Sigmoid colon (tissue), 7 donors: ENCODE measurements at regions of chr15 and their contacts with region 1.

Region 1: DNA sequence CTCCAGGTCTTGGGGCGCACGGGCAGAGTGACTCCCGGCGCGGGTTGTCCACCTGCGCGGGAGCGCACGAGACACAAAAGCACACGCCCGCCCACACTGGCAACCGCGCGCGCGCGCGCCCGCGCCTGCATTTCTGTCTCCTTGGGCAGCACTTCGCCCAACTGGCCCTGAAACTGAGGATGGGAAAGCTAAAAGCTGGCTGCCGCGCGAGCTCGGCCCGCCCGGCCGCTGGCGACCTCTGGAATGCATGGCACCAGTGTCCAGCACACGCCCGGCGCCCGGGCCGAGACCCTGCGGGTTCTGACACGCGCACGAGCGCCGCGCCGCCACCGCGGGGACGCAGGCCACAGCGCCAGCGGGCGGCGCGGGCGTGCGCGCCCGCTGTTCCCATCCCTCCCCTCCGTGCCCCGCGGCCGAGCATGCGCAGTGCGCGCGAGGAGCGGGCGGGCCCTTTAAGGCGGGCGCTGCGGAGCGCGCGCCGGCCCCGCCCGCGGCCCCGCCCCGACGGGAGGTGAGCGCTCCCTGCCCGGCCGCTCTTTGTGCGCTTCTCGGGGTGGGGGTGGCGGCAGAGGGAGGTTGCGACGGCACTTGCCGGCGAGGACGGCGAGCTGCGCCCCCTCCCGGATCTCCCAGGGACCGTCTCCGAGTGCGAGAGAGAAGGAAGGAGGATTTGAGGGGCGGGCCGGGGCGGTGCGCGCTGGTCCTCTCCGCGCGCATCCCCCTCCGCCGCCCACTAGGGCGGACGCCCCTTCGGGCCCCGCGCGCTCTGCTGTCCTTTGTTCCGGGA is 1.0 kb upstream of the MEX3B start:
- DNase-seq: peak; percentile 96
- H3K4me3 ChIP-seq: peak overlapping the region; percentile 73 to 96 (median 87)
- H3K27ac ChIP-seq: peak overlapping the region; percentile 98
- H3K4me1 ChIP-seq: peaks cover 0 to 32% (median 24%) of the 10 kb centered on the region in 4 donors
- H3K27me3 ChIP-seq: no peaks in the 10 kb centered on the region
- CTCF ChIP-seq: peak; percentile 26 to 72 (median 58)
- EP300 ChIP-seq: no peak
- POLR2A ChIP-seq: peak in 1 of 2 donors; percentile 15

Region 2: DNA sequence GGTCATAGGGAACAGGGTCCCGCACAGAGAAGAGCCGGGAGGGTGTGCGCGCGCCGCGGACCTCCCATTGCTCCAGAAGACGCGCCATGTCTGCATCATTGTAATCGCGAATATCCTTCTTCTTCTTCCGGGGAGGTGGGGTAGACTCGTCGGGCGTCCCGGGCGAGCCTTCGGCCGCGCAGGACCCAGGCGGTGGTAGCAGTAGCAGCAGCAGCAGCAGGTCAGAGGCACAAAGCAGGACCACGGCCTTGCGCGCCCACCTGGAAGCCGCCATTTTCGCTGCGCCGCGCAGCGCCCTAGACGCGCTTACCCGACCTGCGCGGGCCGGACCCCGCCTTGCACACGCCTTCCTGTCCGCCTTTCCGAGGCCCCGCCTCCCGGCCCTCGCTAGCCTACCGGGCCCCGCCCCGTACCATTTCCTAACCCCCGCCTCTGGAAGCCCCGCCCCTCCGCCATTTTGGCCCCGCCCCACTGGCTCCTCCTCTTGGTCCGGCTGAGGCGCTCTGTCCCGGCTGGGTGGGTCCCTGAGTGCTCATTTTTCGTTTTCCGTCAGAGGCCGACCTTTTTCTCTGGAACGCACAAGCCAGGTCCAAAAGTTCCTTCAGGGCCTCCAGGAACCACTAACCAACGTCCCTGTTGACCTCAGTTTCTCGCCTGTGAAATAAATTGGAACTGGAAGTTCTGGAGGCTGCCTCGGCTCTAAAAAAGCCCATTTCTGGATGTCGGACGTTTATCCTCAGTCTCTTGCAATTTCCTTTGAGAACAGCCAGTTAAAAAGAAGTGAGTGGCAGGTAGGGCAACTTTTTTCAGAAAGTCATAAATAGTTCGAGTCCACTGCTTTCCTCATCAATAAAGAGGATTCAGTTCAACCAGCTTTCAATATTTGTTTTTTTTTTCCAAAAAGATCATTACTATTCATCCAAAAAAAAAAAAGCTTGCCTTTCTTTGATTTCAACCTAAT is 1057.1 kb before region 1 on chr15 and contains the start of gene MESD:
- intact Hi-C with region 1: loop called (anchors 10 kb)
- DNase-seq: peak; percentile 99
- H3K4me3 ChIP-seq: peak within 1 kb of the TSS; percentile 69 to 92 (median 87)
- H3K27ac ChIP-seq: peak within 1 kb of the TSS; percentile 89 to 94 (median 92)
- H3K4me1 ChIP-seq: peaks cover 0 to 46% (median 34%) of the 10 kb centered on the region in 4 donors
- H3K27me3 ChIP-seq: no peaks in the 10 kb centered on the region
- CTCF ChIP-seq: no peak
- EP300 ChIP-seq: no peak
- POLR2A ChIP-seq: peak; percentile 72 to 73
- total RNA-seq, gene MESD: 11.7 to 20.8 (median 15.7) TPM

Region 3: GRCh38 chr15:81323944-81324881 is 722.6 kb before region 1 on chr15 and contains the start of gene STARD5:
- intact Hi-C with region 1: loop called (anchors 5 kb)
- DNase-seq: peak; percentile 99
- H3K4me3 ChIP-seq: peak within 1 kb of the TSS; percentile 57 to 79 (median 72)
- H3K27ac ChIP-seq: peak within 1 kb of the TSS; percentile 71 to 81 (median 76)
- H3K4me1 ChIP-seq: peaks cover 0 to 20% (median 6%) of the 10 kb centered on the region in 4 donors
- H3K27me3 ChIP-seq: no peaks in the 10 kb centered on the region
- CTCF ChIP-seq: no peak
- EP300 ChIP-seq: no peak
- POLR2A ChIP-seq: peak; percentile 36 to 89
- total RNA-seq, gene STARD5: 0.66 to 6.4 (median 3.0) TPM

Region 4: DNA sequence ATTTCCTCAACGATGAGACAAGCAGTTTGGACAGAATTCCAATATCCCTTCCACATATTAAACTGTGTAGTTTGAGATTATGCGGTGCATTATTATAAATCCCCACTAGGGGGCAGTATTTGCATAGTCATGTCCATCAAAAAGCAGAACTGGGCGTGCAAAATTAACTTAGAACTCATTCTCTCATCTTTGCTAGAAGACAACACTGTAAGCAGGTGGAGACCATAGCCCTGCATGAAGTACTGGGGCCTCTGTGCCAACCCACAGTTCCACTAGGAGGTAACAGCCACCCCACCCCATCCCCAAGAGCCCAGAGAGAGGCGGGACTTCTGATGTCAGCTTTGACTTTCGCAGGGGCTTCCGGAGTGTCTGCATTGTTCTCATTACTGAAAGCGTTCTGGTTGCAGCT is 566.2 kb before region 1 on chr15:
- intact Hi-C with region 1: loop called (anchors 2 kb)
- DNase-seq: no peak
- H3K4me3 ChIP-seq: no peak overlapping the region
- H3K27ac ChIP-seq: no peak overlapping the region
- H3K4me1 ChIP-seq: no peaks in the 10 kb centered on the region
- H3K27me3 ChIP-seq: no peaks in the 10 kb centered on the region
- CTCF ChIP-seq: peak; percentile 58 to 90 (median 86)
- EP300 ChIP-seq: no peak
- POLR2A ChIP-seq: no peak

Region 5: DNA sequence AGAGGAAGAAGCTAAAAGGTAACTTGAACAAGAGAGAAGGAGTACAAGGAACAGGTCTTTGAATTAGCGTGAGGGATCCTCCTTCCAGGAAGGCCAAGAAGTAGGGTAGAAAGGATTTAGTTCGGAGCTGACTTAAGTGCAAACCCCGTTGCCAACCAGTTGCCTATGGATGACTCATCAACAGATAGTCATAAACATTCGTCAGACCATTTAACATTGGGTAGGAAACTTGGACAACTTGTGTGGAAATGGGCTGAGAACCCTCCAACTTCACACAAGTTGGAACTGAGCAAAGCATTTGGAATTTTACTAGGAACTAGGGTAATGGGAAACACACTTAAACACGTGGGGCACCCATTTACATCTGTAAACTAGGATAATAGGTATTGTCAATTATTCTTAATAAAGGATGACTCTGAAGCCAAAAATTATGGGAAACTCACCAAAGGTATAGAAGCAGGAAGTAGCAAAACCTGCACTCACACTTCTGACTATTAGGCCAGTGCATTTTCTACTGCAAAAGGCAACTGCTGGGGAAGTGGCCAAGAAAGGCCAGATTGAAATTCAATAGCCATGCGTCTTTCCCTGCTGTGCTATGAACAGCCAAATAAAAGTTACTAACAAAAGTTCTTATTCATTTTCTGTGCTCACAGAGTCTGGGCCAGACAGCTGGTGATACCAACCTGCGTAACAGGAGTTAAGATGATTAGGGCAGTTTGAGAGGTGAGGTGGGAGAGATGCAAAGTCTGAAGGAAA is 498.3 kb before region 1 on chr15:
- intact Hi-C with region 1: loop called (anchors 10 kb)
- DNase-seq: no peak
- H3K4me3 ChIP-seq: no peak overlapping the region
- H3K27ac ChIP-seq: peak overlapping the region in 3 of 4 donors; percentile 13 to 47 (median 36)
- H3K4me1 ChIP-seq: peaks cover 0 to 32% (median 20%) of the 10 kb centered on the region in 4 donors
- H3K27me3 ChIP-seq: no peaks in the 10 kb centered on the region
- CTCF ChIP-seq: no peak
- EP300 ChIP-seq: no peak
- POLR2A ChIP-seq: no peak

Region 6: DNA sequence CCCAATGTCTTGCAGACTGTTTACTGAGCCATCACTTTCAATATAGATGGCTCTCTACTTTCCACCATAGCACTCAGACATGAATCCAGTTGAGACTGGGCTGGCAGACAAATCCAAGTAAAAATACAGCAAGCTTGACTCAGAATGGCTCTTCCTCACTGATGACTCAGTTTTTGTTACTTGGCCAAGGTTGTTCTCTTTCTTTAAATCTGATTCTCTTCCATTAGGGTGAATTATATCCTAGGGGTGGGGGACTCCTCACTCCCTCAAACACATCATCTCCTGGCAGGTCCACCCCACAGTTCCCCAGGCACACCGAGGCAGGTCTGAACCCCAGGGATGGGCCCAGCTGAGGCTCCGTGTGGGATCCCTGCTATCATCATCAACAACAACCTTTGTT is 158.9 kb before region 1 on chr15:
- intact Hi-C with region 1: loop called (anchors 5 kb)
- DNase-seq: no peak
- H3K4me3 ChIP-seq: no peak overlapping the region
- H3K27ac ChIP-seq: peak overlapping the region in 3 of 4 donors; percentile 55 to 70 (median 57)
- H3K4me1 ChIP-seq: peaks cover 0 to 31% (median 26%) of the 10 kb centered on the region in 4 donors
- H3K27me3 ChIP-seq: no peaks in the 10 kb centered on the region
- CTCF ChIP-seq: no peak
- EP300 ChIP-seq: no peak
- POLR2A ChIP-seq: no peak

Region 7: DNA sequence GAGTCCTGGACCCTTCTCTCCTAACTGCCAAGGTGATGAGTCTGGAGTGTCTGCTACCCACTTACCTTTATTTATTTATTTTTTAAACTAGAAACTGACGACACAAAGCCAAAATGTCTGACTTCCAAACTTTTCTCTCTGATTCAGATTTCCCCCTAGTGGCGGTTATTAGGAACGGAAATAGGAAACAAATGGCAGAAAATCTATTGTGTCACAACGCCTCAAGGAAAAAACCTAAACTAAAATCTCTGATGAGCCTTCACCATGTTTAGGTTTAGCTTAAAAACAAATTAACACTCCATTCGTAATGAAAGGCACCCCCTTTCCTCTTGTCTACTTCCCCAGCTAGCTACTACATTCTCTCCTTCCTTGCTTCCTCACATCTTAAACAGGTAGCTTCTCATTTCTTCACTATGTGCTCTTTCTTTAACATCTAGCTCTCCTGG is 93.0 kb after region 1 on chr15:
- intact Hi-C with region 1: loop called (anchors 2 kb)
- DNase-seq: no peak
- H3K4me3 ChIP-seq: no peak overlapping the region
- H3K27ac ChIP-seq: no peak overlapping the region
- H3K4me1 ChIP-seq: peaks cover 0 to 10% (median 1%) of the 10 kb centered on the region in 4 donors
- H3K27me3 ChIP-seq: no peaks in the 10 kb centered on the region
- CTCF ChIP-seq: peak; percentile 57 to 72 (median 64)
- EP300 ChIP-seq: no peak
- POLR2A ChIP-seq: no peak

Region 8: GRCh38 chr15:82165948-82166376 is 119.1 kb after region 1 on chr15:
- intact Hi-C with region 1: no loop called
- DNase-seq: no peak
- H3K4me3 ChIP-seq: no peak overlapping the region
- H3K27ac ChIP-seq: no peak overlapping the region
- H3K4me1 ChIP-seq: no peaks in the 10 kb centered on the region
- H3K27me3 ChIP-seq: no peaks in the 10 kb centered on the region
- CTCF ChIP-seq: no peak
- EP300 ChIP-seq: no peak
- POLR2A ChIP-seq: no peak